Motor neuron (in vitro differentiated cells): ENCODE measurements at regions of chr11 and their contacts with region 1.

Region 1: GRCh38 chr11:47152953-47153950 is 23.4 kb downstream of the ARFGAP2 start:
- ATAC-seq: peak; percentile 58 to 83 (median 74)
- H3K4me3 ChIP-seq: no peak overlapping the region
- H3K27ac ChIP-seq: no peak overlapping the region
- H3K4me1 ChIP-seq: no peaks in the 10 kb centered on the region

Region 2: DNA sequence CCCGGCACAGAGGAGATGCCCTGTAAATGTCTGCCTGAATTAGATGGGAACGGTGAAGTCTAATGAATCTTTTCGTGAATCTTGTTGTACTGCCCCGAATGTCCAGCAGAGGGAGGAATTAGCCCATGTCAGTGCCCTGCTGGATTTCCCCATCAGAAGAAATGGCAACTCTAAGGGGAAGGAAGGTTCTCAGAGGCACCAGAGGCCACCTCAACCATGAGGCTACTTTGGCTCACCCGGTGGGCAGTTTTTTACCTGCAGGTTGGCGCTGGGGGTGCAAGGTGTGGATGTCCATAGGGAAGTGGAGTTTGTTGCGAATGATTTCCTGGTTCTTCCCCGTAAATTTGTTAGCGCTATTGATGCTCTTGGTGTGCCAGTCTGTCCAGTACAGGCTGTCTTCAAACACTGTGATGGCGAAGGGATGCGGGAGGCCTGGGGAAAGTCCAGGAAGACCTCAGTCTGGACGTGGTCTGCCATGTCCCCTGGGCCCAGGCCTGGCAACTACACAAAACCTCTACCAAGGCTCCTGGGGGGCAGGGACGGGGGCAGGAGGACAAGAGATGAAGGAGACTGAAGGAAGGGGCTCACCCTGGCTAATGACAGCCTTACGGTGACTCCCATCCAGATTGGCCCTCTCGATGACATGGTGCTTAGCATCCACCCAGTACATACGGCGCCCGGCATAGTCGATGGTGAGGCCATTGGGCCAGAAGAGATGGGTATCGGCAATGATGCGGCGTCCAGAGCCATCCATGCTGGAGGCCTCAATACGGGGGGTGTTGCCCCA is 263.4 kb before region 1 on chr11:
- in situ Hi-C with region 1: loop called (anchors 10 to 25 kb)
- ATAC-seq: peak; percentile 70 to 88 (median 82)
- H3K4me3 ChIP-seq: no peak overlapping the region
- H3K27ac ChIP-seq: no peak overlapping the region
- H3K4me1 ChIP-seq: no peaks in the 10 kb centered on the region

Region 3: GRCh38 chr11:46958777-46959176 is 194.5 kb before region 1 on chr11:
- in situ Hi-C with region 1: no loop called
- ATAC-seq: no peak
- H3K4me3 ChIP-seq: no peak overlapping the region
- H3K27ac ChIP-seq: no peak overlapping the region
- H3K4me1 ChIP-seq: no peaks in the 10 kb centered on the region

Region 4: GRCh38 chr11:47355283-47356128 is 202.3 kb after region 1 on chr11:
- in situ Hi-C with region 1: no loop called
- ATAC-seq: peak; percentile 79 to 97 (median 86)
- H3K4me3 ChIP-seq: peak overlapping the region in 3 of 5 donors; percentile 9 to 17 (median 14)
- H3K27ac ChIP-seq: no peak overlapping the region
- H3K4me1 ChIP-seq: peaks cover 5% of the 10 kb centered on the region in 2 donors